ENCODE measurements at regions of chr12 and their contacts with region 1.

Region 1: GRCh38 chr12:69470189-69471075 is at the start of gene FRS2:
- DNase-seq: peak; percentile 92 to 95 (median 93)
- ATAC-seq: peak; percentile 98 to 100 (median 99)
- H3K4me3 ChIP-seq: peak within 1 kb of the TSS; percentile 70 to 99 (median 94)
- H3K27ac ChIP-seq: peak within 1 kb of the TSS; percentile 43 to 98 (median 92)
- H3K4me1 ChIP-seq: peaks cover 0 to 65% (median 44%) of the 10 kb centered on the region in 12 donors
- H3K27me3 ChIP-seq: no peaks in the 10 kb centered on the region
- CTCF ChIP-seq: peak in 8 of 12 donors; percentile 15 to 45 (median 26)
- POLR2A ChIP-seq: peak in 1 of 2 donors; percentile 82
- total RNA-seq, gene FRS2: 14.8 to 33.9 (median 21.4) TPM

Region 2: GRCh38 chr12:69309461-69309860 is 161.0 kb before region 1 on chr12:
- intact Hi-C with region 1: no loop called
- DNase-seq: no peak
- ATAC-seq: no peak
- H3K4me3 ChIP-seq: no peak overlapping the region
- H3K27ac ChIP-seq: no peak overlapping the region
- H3K4me1 ChIP-seq: no peaks in the 10 kb centered on the region
- H3K27me3 ChIP-seq: no peaks in the 10 kb centered on the region
- CTCF ChIP-seq: no peak
- POLR2A ChIP-seq: no peak

Region 3: GRCh38 chr12:69392179-69392928 is 78.1 kb before region 1 on chr12:
- intact Hi-C with region 1: no loop called
- DNase-seq: no peak
- ATAC-seq: no peak
- H3K4me3 ChIP-seq: no peak overlapping the region
- H3K27ac ChIP-seq: no peak overlapping the region
- H3K4me1 ChIP-seq: no peaks in the 10 kb centered on the region
- H3K27me3 ChIP-seq: no peaks in the 10 kb centered on the region
- CTCF ChIP-seq: no peak
- POLR2A ChIP-seq: no peak

Region 4: GRCh38 chr12:69415471-69416275 is 54.8 kb before region 1 on chr12:
- intact Hi-C with region 1: loop called in 1 of 10 experiments (anchors 5 kb)
- DNase-seq: peak; percentile 29 to 60 (median 54)
- ATAC-seq: peak in 3 of 4 donors; percentile 81 to 94 (median 91)
- H3K4me3 ChIP-seq: peak overlapping the region in 3 of 12 donors; percentile 2 to 23 (median 11)
- H3K27ac ChIP-seq: peak overlapping the region in 2 of 12 donors; percentile 22 to 41
- H3K4me1 ChIP-seq: peaks cover 0 to 11% (median 3%) of the 10 kb centered on the region in 12 donors
- H3K27me3 ChIP-seq: no peaks in the 10 kb centered on the region
- CTCF ChIP-seq: peak; percentile 42 to 82 (median 66)
- POLR2A ChIP-seq: no peak

Region 5: DNA sequence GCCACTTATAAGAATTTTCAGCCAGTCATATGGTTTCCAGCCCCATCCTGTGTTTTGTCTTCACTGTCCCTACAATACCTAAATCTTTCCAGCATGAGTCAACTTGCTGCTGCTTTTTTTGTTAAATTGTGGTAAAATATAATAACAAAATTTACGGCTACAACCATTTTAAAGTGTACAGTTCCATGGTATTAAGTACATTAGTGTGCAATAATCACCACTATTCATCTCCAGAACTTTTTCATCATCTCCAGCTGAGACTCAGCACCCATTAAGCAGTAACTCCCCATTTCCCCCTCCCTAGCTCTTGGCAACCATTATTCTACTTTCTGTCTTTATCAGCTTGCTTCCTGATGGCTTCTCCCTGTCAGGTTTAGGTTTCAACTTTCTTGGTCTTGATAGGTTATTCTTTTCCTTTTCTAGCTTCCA is 38.9 kb after region 1 on chr12:
- intact Hi-C with region 1: loop called in 1 of 10 experiments (anchors 5 kb)
- DNase-seq: no peak
- ATAC-seq: no peak
- H3K4me3 ChIP-seq: no peak overlapping the region
- H3K27ac ChIP-seq: peak overlapping the region in 1 of 12 donors; percentile 33
- H3K4me1 ChIP-seq: peaks cover 0 to 97% (median 54%) of the 10 kb centered on the region in 12 donors
- H3K27me3 ChIP-seq: no peaks in the 10 kb centered on the region
- CTCF ChIP-seq: no peak
- POLR2A ChIP-seq: no peak

Region 6: DNA sequence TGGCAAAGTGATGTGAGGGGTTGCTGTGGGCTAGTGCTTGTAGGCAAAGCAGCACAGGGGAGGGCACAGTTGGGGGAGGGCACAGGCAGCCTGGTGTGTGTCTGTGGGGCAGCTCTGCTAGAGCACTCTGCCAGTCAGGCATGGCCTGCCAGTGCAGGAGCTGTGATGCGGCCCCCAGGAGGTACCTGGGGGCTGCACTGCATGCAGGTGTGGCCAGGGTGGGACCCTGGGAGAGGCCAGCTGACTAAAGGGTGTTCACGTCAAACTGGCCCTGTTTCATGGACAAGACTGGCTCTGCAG is 53.8 kb after region 1 on chr12:
- intact Hi-C with region 1: no loop called
- DNase-seq: no peak
- ATAC-seq: peak in 3 of 4 donors; percentile 26 to 63 (median 48)
- H3K4me3 ChIP-seq: no peak overlapping the region
- H3K27ac ChIP-seq: no peak overlapping the region
- H3K4me1 ChIP-seq: peaks cover 0 to 30% (median 10%) of the 10 kb centered on the region in 12 donors
- H3K27me3 ChIP-seq: no peaks in the 10 kb centered on the region
- CTCF ChIP-seq: no peak
- POLR2A ChIP-seq: no peak

Region 7: GRCh38 chr12:69570545-69571399 is 100.3 kb after region 1 on chr12:
- intact Hi-C with region 1: loop called in 9 of 10 experiments (anchors 2 to 5 kb)
- DNase-seq: peak in 4 of 5 donors; percentile 18 to 37 (median 34)
- ATAC-seq: peak in 2 of 4 donors; percentile 77 to 80
- H3K4me3 ChIP-seq: no peak overlapping the region
- H3K27ac ChIP-seq: no peak overlapping the region
- H3K4me1 ChIP-seq: peaks cover 0 to 5% (median 0%) of the 10 kb centered on the region in 12 donors
- H3K27me3 ChIP-seq: no peaks in the 10 kb centered on the region
- CTCF ChIP-seq: peak; percentile 70 to 87 (median 78)
- POLR2A ChIP-seq: no peak

Region 8: GRCh38 chr12:69608114-69608513 is 137.7 kb after region 1 on chr12:
- intact Hi-C with region 1: no loop called
- DNase-seq: no peak
- ATAC-seq: no peak
- H3K4me3 ChIP-seq: peak overlapping the region in 10 of 12 donors; percentile 12 to 62 (median 47)
- H3K27ac ChIP-seq: peak overlapping the region in 11 of 12 donors; percentile 20 to 84 (median 64)
- H3K4me1 ChIP-seq: peaks cover 0 to 10% (median 0%) of the 10 kb centered on the region in 12 donors
- H3K27me3 ChIP-seq: no peaks in the 10 kb centered on the region
- CTCF ChIP-seq: no peak
- POLR2A ChIP-seq: no peak